Left ventricle myocardium superior (tissue), 1 donor: ENCODE measurements at regions of chr5 and their contacts with region 1.

Region 1: GRCh38 chr5:80686757-80687156 is 32.0 kb upstream of the DHFR start:
- DNase-seq: no peak
- ATAC-seq: no peak

Region 2: DNA sequence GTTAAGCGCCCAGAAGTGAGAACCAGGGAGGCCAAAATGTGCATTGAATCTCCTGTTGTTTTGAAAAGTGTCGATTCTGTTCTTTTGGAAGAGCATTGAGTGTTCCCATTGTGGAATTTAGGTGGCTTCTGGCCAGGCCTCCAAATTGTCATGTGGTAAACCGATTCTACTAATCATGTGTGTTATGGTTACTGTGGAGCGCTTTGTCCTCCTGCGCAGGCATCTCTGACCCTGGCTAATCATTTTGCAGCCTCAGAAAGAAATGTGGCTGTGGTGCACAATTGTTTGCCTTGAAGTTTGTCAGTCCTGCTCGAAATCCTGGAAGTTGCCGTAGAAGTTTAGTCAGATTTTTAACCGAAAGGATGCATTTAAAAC is 394.7 kb after region 1 on chr5:
- intact Hi-C with region 1: no loop called
- DNase-seq: no peak
- ATAC-seq: no peak

Region 3: GRCh38 chr5:81292130-81292529 is 605.4 kb after region 1 on chr5:
- intact Hi-C with region 1: loop called (anchors 10 kb)
- DNase-seq: no peak
- ATAC-seq: no peak